ENCODE measurements at regions of chr1 and their contacts with region 1.

Region 1: GRCh38 chr1:160653620-160654016 is 6.8 kb upstream of the SLAMF1 start:
- DNase-seq: no peak
- ATAC-seq: no peak
- H3K4me3 Mint-ChIP-seq: no peak overlapping the region
- H3K27ac Mint-ChIP-seq: no peak overlapping the region
- H3K4me1 Mint-ChIP-seq: peaks cover 89% of the 10 kb centered on the region
- H3K27me3 Mint-ChIP-seq: no peaks in the 10 kb centered on the region

Region 2: DNA sequence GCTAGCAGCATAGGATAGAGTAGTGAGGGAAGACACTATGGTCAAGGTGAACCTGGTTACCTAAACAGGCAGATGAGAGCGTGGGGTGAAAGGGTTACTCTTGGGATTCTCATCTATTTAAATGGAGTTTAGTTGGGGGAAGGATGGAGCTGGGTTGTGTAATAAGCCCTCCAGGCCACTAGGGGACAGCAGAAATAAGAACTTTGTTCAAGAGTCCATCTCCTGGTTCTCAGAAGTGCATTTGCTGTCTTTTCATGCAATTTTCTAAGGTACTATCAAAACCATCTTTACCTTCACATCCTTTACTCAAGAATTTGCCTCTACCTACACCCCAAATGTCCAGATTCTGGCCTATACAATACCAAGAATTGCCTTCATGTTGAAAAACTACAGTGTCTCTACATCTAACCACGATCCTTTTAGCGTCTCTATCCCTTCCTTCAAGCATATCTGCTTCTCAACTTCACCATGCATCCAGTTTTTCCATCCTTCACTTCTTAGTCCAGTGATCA is 34.8 kb before region 1 on chr1:
- CTCF ChIA-PET with region 1: interaction called, 9 read pairs
- POLR2A ChIA-PET with region 1: interaction called, 3 read pairs
- intact Hi-C with region 1: loop called in 1 of 2 experiments (anchors 2 kb)
- DNase-seq: peak; percentile 65
- ATAC-seq: no peak
- H3K4me3 Mint-ChIP-seq: no peak overlapping the region
- H3K27ac Mint-ChIP-seq: peak overlapping the region; percentile 71
- H3K4me1 Mint-ChIP-seq: peaks cover 60% of the 10 kb centered on the region
- H3K27me3 Mint-ChIP-seq: no peaks in the 10 kb centered on the region

Measured in activated CD4-positive, alpha-beta T cell treated with anti-CD3 and anti-CD28 coated beads for 36 hours (primary cell).